H1 (cell line): ENCODE measurements at regions of chr16 and their contacts with region 1.

Region 1: DNA sequence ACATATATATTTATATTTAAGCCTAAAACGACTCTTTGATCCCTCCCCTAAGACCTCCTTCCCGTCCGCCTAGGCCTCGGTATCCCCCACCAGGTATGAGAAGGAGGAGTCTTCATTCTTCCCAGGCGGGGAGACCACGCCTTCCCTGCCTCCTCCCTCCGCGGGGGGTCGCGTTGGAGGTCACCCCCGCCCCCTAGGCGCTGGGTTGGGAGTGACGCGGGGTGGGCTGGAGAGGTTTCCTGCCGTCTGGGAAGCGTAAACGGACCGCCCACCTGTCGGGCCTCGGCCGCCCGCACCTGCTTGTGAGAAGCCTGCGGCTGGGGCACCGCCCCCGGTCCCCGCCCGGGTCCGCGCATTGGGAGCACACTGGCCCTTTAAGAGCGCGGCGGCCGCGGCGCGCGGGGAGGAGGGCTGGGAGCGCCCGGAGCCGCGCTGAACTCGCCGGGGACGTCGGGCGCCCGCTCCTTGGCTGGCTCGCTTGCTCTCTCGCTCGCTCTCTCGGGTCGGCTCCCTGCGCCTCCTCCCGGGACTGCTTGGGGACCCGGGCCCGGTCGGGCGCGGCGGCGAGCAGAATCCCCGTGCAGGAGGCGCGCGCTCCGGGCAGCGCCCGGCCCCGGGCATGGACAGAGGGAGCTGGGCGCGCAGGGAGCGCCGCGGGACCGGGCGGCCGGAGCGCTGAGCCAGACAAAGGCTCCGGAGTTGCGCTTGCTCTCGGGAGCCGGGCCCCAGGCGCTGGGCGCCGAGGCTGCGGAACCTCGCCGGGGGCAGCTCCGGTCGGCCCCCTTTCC is at the start of gene MMP15:
- DNase-seq: peak; percentile 97 to 98
- H3K4me3 ChIP-seq: peak within 1 kb of the TSS; percentile 73 to 90 (median 82)
- H3K27ac ChIP-seq: no peak within 1 kb of the TSS
- H3K4me1 ChIP-seq: peaks cover 0 to 31% (median 20%) of the 10 kb centered on the region in 4 experiments; a peak in 6 of 7 replicates
- H3K27me3 ChIP-seq: no peaks in the 10 kb centered on the region; a peak in 3 of 7 replicates
- CTCF ChIP-seq: no peak
- EP300 ChIP-seq: no peak
- POLR2A ChIP-seq: no peak; a peak in 1 of 3 replicates
- RAD21 ChIP-seq: peak in 1 of 2 experiments; percentile 5; a peak in 1 of 4 replicates
- total RNA-seq, gene MMP15: 42.2 and 44.0 TPM in 2 replicates

Region 2: GRCh38 chr16:57955572-57956188 is 69.9 kb before region 1 on chr16:
- CTCF ChIA-PET with region 1: no interaction called
- POLR2A ChIA-PET with region 1: no interaction called
- DNase-seq: no peak
- H3K4me3 ChIP-seq: no peak overlapping the region
- H3K27ac ChIP-seq: no peak overlapping the region; the same call in 1 of the 2 replicates
- H3K4me1 ChIP-seq: peaks cover 0 to 10% (median 5%) of the 10 kb centered on the region in 4 experiments; a peak in 6 of 7 replicates
- H3K27me3 ChIP-seq: no peaks in the 10 kb centered on the region; a peak in 1 of 7 replicates
- CTCF ChIP-seq: peak in 2 of 3 experiments; percentile 5 to 12; a peak in 2 of 4 replicates
- EP300 ChIP-seq: no peak
- POLR2A ChIP-seq: no peak
- RAD21 ChIP-seq: no peak

Region 3: DNA sequence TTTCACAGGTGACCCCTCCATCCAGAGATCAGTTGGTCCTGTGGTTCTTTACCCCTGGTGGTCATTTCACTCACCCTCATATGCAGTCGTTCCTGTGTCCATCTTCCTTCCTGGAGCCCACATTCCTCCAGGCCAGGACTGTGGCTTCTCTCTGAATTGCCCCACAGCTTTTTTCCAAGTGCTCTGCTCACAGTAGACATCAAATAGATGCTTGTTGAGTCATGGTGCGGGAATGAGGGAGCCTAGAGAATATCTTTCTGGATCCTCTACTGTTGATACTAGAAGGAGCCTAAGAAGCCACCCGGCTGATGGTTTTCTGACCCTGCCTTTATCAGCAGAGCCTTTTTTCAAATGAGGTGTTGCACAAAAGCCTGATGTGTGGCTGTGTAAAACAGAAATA is 13.9 kb before region 1 on chr16:
- CTCF ChIA-PET with region 1: interaction called, 12 read pairs
- POLR2A ChIA-PET with region 1: interaction called, 5 read pairs
- DNase-seq: no peak
- H3K4me3 ChIP-seq: no peak overlapping the region
- H3K27ac ChIP-seq: no peak overlapping the region
- H3K4me1 ChIP-seq: peaks cover 0 to 4% (median 1%) of the 10 kb centered on the region in 4 experiments; a peak in 3 of 7 replicates
- H3K27me3 ChIP-seq: no peaks in the 10 kb centered on the region
- CTCF ChIP-seq: no peak
- EP300 ChIP-seq: no peak
- POLR2A ChIP-seq: no peak
- RAD21 ChIP-seq: no peak

Region 4: DNA sequence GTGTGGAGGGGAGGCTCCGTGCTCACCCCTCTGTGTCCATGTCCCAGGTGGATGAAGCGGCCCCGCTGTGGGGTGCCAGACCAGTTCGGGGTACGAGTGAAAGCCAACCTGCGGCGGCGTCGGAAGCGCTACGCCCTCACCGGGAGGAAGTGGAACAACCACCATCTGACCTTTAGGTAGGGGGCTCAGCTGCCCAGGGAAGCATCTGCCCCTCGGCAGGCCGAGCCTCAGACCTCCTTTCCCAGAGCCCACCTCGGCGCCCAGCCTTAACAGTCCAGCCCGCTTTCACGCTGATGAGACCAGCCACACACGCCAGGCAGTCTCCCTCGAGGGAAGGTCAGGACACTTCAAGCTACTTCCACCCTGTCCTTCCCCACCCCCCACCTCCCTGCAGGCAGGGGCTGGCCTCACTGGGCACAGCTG is 12.7 kb after region 1 on chr16:
- CTCF ChIA-PET with region 1: interaction called, 47 read pairs
- POLR2A ChIA-PET with region 1: interaction called, 6 read pairs
- DNase-seq: no peak
- H3K4me3 ChIP-seq: no peak overlapping the region
- H3K27ac ChIP-seq: no peak overlapping the region
- H3K4me1 ChIP-seq: peaks cover 0 to 2% (median under 1%) of the 10 kb centered on the region in 4 experiments; a peak in 2 of 7 replicates
- H3K27me3 ChIP-seq: no peaks in the 10 kb centered on the region
- CTCF ChIP-seq: no peak
- EP300 ChIP-seq: no peak
- POLR2A ChIP-seq: no peak
- RAD21 ChIP-seq: no peak

Region 5: GRCh38 chr16:58047557-58048348 is 22.2 kb after region 1 on chr16:
- CTCF ChIA-PET with region 1: interaction called, 17 read pairs
- POLR2A ChIA-PET with region 1: interaction called, 4 read pairs
- DNase-seq: no peak
- H3K4me3 ChIP-seq: no peak overlapping the region
- H3K27ac ChIP-seq: no peak overlapping the region
- H3K4me1 ChIP-seq: peaks cover 0 to 15% (median 8%) of the 10 kb centered on the region in 4 experiments; a peak in 4 of 7 replicates
- H3K27me3 ChIP-seq: no peaks in the 10 kb centered on the region
- CTCF ChIP-seq: peak in 2 of 3 experiments; percentile 10 to 15; a peak in 1 of 4 replicates
- EP300 ChIP-seq: no peak
- POLR2A ChIP-seq: no peak
- RAD21 ChIP-seq: peak; percentile 50 to 51